ENCODE measurements at regions of chr10 and their contacts with region 1.

Region 1: DNA sequence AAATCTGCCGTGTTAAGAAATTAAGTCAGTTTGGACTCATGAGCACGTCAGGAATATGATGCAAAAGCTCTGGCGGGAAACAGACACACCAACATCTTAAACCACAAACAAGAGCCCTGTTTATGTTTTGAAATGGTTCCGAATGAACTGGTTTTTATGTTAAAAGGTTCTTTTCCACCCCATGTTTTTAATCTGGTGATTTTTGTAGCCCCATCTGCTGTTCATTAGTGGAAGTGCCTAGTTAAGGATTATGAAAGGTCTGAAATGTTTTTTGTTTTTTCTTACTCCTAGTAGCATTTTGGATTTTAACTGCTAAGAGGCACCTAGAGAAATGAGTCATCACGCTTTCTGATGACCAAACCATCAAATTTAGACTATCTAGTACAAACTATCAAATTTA is 404.1 kb upstream of the MKI67 start:
- DNase-seq: no peak

Region 2: GRCh38 chr10:128263891-128264688 is 266.2 kb before region 1 on chr10:
- intact Hi-C with region 1: loop called (anchors 2 kb)
- DNase-seq: peak; percentile 63 to 96 (median 82)

Measured in posterior cingulate gyrus (tissue), 11 donors.